IMR-90 (cell line): ENCODE measurements at regions of chr6 and their contacts with region 1.

Region 1: GRCh38 chr6:108558372-108559096 is 2.2 kb upstream of the FOXO3 start:
- DNase-seq: peak; percentile 99
- ATAC-seq: peak; percentile 55
- H3K4me3 ChIP-seq: peak overlapping the region; percentile 79
- H3K27ac ChIP-seq: peak overlapping the region; percentile 94
- H3K4me1 ChIP-seq: peaks cover 12% of the 10 kb centered on the region
- H3K27me3 ChIP-seq: no peaks in the 10 kb centered on the region
- CTCF ChIP-seq: no peak
- POLR2A ChIP-seq: no peak
- RAD21 ChIP-seq: peak; percentile 24; the same call in 1 of the 2 replicates

Region 2: GRCh38 chr6:108541838-108542759 is 16.4 kb before region 1 on chr6:
- CTCF ChIA-PET with region 1: interaction called, 4 read pairs
- POLR2A ChIA-PET with region 1: no interaction called
- dilution Hi-C with region 1: no loop called
- in situ Hi-C with region 1: no loop called
- intact Hi-C with region 1: loop called (anchors 1 kb)
- DNase-seq: peak; percentile 87
- ATAC-seq: peak; percentile 86
- H3K4me3 ChIP-seq: no peak overlapping the region
- H3K27ac ChIP-seq: no peak overlapping the region
- H3K4me1 ChIP-seq: peaks cover 10% of the 10 kb centered on the region
- H3K27me3 ChIP-seq: no peaks in the 10 kb centered on the region
- CTCF ChIP-seq: peak; percentile 91
- POLR2A ChIP-seq: peak; percentile 47; the same call in 1 of the 2 replicates
- RAD21 ChIP-seq: peak; percentile 100

Region 3: DNA sequence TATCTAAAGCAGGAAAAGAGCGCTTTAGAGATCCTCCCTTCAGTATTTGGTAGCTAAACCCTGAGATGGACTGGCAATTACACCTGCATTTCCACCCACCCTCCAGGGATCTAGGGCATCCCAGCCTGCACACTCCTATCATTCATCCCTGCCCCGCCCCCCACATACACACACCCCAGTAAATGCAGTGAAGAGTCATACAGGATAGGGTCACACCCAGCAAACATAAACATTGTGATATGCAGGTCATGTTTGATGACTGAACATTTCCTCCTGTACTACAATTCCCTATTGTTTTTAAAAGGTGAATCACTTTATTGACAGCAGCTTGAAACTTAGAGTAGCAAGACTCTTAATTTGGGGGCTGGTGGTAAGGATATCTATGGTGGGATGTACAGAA is 115.1 kb after region 1 on chr6:
- CTCF ChIA-PET with region 1: no interaction called
- POLR2A ChIA-PET with region 1: interaction called, 7 read pairs
- dilution Hi-C with region 1: no loop called
- in situ Hi-C with region 1: no loop called
- intact Hi-C with region 1: loop called (anchors 5 kb)
- DNase-seq: peak; percentile 29
- ATAC-seq: no peak
- H3K4me3 ChIP-seq: no peak overlapping the region
- H3K27ac ChIP-seq: no peak overlapping the region
- H3K4me1 ChIP-seq: peaks cover 22% of the 10 kb centered on the region
- H3K27me3 ChIP-seq: no peaks in the 10 kb centered on the region
- CTCF ChIP-seq: no peak
- POLR2A ChIP-seq: no peak
- RAD21 ChIP-seq: no peak

Region 4: GRCh38 chr6:108782179-108783041 is 223.9 kb after region 1 on chr6:
- CTCF ChIA-PET with region 1: no interaction called
- POLR2A ChIA-PET with region 1: no interaction called
- dilution Hi-C with region 1: no loop called
- in situ Hi-C with region 1: no loop called
- intact Hi-C with region 1: loop called (anchors 1 kb)
- DNase-seq: peak; percentile 81
- ATAC-seq: peak; percentile 88
- H3K4me3 ChIP-seq: peak overlapping the region; percentile 53
- H3K27ac ChIP-seq: peak overlapping the region; percentile 71
- H3K4me1 ChIP-seq: peaks cover 9% of the 10 kb centered on the region
- H3K27me3 ChIP-seq: no peaks in the 10 kb centered on the region
- CTCF ChIP-seq: peak; percentile 82
- POLR2A ChIP-seq: no peak
- RAD21 ChIP-seq: peak; percentile 84

Region 5: GRCh38 chr6:108896111-108896661 is 337.7 kb after region 1 on chr6:
- CTCF ChIA-PET with region 1: interaction called, 3 read pairs
- POLR2A ChIA-PET with region 1: no interaction called
- dilution Hi-C with region 1: no loop called
- in situ Hi-C with region 1: no loop called
- intact Hi-C with region 1: loop called (anchors 5 kb)
- DNase-seq: peak; percentile 92
- ATAC-seq: peak; percentile 83
- H3K4me3 ChIP-seq: no peak overlapping the region
- H3K27ac ChIP-seq: peak overlapping the region; percentile 98
- H3K4me1 ChIP-seq: peaks cover 13% of the 10 kb centered on the region
- H3K27me3 ChIP-seq: no peaks in the 10 kb centered on the region
- CTCF ChIP-seq: no peak
- POLR2A ChIP-seq: no peak
- RAD21 ChIP-seq: no peak

Region 6: DNA sequence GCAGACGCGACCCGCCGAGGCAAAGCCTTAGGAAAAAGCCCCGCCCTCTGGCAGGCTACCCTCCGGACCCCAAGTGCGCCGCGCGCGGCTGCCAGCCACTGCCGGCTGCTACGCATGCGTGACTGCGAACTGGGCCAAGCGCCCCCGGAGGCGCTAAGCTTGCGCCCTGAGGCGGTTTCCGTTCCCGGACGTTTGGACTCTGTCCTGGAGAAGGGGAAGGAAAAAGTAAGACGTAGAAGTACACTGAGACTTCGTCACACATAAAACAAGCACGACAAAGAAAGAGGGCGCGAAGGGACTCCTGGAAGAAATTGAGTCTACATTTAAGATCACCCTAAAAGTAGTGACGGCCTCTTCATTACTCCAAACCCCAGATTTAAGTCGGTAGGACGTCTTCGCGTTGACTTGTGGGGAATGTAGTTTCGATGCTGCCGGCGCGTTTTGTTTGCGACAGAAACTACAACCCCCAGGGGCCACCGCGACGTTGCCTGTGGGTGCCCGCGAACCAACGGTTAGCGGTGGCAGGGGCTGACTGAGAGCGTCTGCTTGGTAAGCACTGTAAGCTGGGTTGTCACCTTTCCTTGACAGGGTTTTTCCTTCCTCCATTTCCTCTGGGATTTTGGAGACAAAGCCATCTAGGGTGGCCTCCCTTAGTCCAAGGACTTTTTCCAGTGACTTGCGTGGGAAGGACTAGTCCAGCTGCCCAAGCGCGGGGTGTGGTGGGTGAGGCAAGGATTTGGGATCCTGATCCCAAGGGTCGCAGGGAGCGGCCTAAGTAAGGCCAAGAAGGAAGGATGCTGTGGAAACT is 536.7 kb after region 1 on chr6 and contains the start of gene CEP57L1:
- CTCF ChIA-PET with region 1: no interaction called
- POLR2A ChIA-PET with region 1: interaction called, 3 read pairs
- dilution Hi-C with region 1: no loop called
- in situ Hi-C with region 1: no loop called
- intact Hi-C with region 1: loop called (anchors 1 kb)
- DNase-seq: peak; percentile 97
- ATAC-seq: peak; percentile 68
- H3K4me3 ChIP-seq: peak within 1 kb of the TSS; percentile 76
- H3K27ac ChIP-seq: peak within 1 kb of the TSS; percentile 89
- H3K4me1 ChIP-seq: peaks cover 3% of the 10 kb centered on the region; the same call in 1 of the 2 replicates
- H3K27me3 ChIP-seq: no peaks in the 10 kb centered on the region
- CTCF ChIP-seq: 0 out of 2 replicates have a peak, but pooled peaks have one; percentile 25
- POLR2A ChIP-seq: peak; percentile 90
- RAD21 ChIP-seq: 0 out of 2 replicates have a peak, but pooled peaks have one; percentile 1
- total RNA-seq, gene CEP57L1: 21.9 and 28.3 TPM in 2 replicates